Stomach (tissue), 19 donors: ENCODE measurements at regions of chr14 and their contacts with region 1.

Region 1: DNA sequence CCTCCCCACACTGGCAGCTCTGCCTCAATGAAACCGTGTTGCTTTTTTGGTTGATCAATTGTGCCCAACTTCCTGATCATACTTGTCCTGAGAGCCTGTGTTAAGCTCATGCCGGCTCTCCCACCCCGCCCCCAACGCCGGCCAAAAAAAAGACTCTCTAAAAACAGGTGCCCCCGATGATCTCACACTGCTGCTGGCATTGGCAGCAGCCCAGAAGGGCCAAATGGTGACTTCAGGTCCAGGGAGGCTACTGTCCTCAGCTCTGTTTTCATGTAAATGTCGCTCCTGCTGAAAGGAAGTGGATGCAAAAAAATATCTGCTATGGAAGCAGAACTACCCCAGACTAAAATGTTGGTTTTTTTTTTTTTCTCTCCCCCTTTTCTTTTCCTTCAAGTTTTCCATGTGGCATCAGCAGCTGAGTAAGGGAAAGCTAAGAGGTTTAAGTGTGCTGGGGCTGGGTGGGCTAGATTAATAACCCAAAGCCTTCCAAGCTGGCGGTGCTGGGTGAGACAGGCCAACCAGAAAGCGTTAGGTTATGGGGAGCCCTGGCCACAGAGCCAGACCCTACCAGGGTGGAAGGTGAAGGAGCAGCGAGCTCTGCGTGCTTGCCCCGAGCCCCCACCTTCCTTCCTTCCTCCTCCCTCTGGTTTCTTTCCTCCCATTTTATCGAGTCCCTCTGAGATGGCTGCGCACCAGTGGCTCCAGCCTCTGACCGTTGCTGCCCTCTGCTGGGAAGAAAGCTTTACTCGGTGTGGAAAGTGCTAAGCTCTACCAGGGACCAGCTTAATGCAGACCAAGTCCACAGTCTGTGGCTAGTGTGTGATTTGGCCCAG is 396.1 kb downstream of the NRXN3 start:
- DNase-seq: peak; percentile 81 to 91
- H3K4me3 ChIP-seq: peak overlapping the region; percentile 26 to 38 (median 32)
- H3K27ac ChIP-seq: no peak overlapping the region
- H3K4me1 ChIP-seq: peaks cover 6 to 16% (median 10%) of the 10 kb centered on the region in 4 donors
- H3K27me3 ChIP-seq: no peaks in the 10 kb centered on the region
- CTCF ChIP-seq: peak in 5 of 7 experiments; percentile 32 to 65 (median 55)
- EP300 ChIP-seq: no peak
- POLR2A ChIP-seq: no peak

Region 2: GRCh38 chr14:77862154-77862786 is 704.0 kb before region 1 on chr14:
- intact Hi-C with region 1: loop called (anchors 10 kb)
- DNase-seq: peak; percentile 83
- H3K4me3 ChIP-seq: no peak overlapping the region
- H3K27ac ChIP-seq: no peak overlapping the region
- H3K4me1 ChIP-seq: peaks cover 0 to 12% (median 4%) of the 10 kb centered on the region in 4 donors
- H3K27me3 ChIP-seq: no peaks in the 10 kb centered on the region
- CTCF ChIP-seq: peak in 6 of 7 experiments; percentile 30 to 97 (median 94)
- EP300 ChIP-seq: no peak
- POLR2A ChIP-seq: no peak

Region 3: DNA sequence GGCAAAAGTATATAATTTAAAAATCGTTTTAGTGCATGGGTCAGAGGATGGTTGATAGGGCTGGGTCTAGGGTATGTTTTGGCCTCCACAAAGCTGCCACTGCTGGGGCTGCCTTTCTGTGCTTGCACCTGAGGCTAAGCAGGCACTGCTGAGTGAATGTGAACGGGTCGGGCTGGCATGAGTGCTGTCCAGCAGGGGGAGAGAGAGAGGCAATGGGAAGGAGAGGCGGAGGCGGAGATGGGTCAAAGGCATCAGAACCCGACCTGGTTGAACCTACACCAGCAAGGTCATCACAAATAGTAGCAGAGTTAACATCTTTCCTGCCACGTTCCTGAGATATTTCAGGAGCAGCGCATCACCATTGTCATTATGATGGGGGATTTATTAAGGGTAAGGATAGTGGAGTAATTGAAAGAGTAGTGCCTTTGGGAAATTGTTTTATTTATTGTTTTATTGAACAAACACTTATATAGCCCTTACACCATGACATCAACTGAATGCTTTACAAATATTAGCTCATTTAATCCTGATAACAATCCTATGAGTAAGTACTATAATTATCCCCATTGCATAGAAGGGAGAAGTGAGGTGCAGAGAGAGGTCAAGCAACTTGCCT is 401.9 kb before region 1 on chr14:
- intact Hi-C with region 1: loop called (anchors 10 kb)
- DNase-seq: peak; percentile 40 to 47
- H3K4me3 ChIP-seq: no peak overlapping the region
- H3K27ac ChIP-seq: no peak overlapping the region
- H3K4me1 ChIP-seq: no peaks in the 10 kb centered on the region
- H3K27me3 ChIP-seq: peaks cover 0 to 57% (median 10%) of the 10 kb centered on the region in 3 donors
- CTCF ChIP-seq: peak in 5 of 7 experiments; percentile 7 to 47 (median 32)
- EP300 ChIP-seq: no peak
- POLR2A ChIP-seq: no peak

Region 4: GRCh38 chr14:78319887-78320635 is 246.2 kb before region 1 on chr14:
- intact Hi-C with region 1: no loop called
- DNase-seq: no peak
- H3K4me3 ChIP-seq: no peak overlapping the region
- H3K27ac ChIP-seq: no peak overlapping the region
- H3K4me1 ChIP-seq: no peaks in the 10 kb centered on the region
- H3K27me3 ChIP-seq: peaks cover 0 to 13% (median 0%) of the 10 kb centered on the region in 3 donors
- CTCF ChIP-seq: no peak
- EP300 ChIP-seq: no peak
- POLR2A ChIP-seq: no peak